ENCODE measurements at regions of chr1 and their contacts with region 1.

Region 1: DNA sequence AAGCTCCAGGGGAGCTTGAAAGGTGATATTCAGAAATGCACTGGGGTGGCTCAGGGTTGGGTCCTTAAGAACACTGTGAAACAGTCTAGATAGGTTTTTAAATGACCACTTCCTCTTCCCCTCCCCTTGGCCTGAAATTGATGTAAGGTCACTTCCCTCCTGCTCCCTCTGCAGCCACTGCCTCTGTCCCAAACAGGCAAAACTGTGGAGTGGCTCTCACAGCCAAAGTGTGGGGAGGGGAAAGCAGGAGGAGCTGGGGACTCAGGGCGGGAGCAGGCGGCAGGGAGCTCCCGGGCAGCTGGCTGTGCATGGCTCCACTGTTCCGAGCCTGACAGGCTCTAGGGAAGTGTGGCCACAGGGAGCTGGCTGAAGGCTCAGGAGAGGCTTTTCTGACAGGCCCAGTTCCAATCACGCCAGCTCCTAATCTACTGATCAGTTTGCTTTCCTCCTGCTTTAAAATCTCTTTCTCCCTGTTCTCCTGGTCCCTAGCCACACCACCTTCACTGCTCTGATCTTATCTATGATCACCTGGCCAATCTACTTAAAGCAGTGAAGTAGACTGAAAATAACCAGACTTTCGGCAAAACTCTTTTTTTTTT is 5.1 kb upstream of the CSRP1 start:
- DNase-seq: no peak
- H3K4me3 ChIP-seq: no peak overlapping the region
- H3K27ac ChIP-seq: no peak overlapping the region
- H3K4me1 ChIP-seq: peaks cover 36% of the 10 kb centered on the region
- H3K27me3 ChIP-seq: no peaks in the 10 kb centered on the region
- CTCF ChIP-seq: no peak

Region 2: GRCh38 chr1:201245092-201245491 is 266.9 kb before region 1 on chr1:
- CTCF ChIA-PET with region 1: no interaction called
- dilution Hi-C with region 1: no loop called
- in situ Hi-C with region 1: no loop called
- intact Hi-C with region 1: no loop called
- DNase-seq: no peak
- H3K4me3 ChIP-seq: no peak overlapping the region
- H3K27ac ChIP-seq: no peak overlapping the region
- H3K4me1 ChIP-seq: no peaks in the 10 kb centered on the region
- H3K27me3 ChIP-seq: peaks cover 4% of the 10 kb centered on the region
- CTCF ChIP-seq: no peak

Region 3: GRCh38 chr1:201385299-201385891 is 126.6 kb before region 1 on chr1:
- CTCF ChIA-PET with region 1: no interaction called
- dilution Hi-C with region 1: no loop called
- in situ Hi-C with region 1: no loop called
- intact Hi-C with region 1: loop called (anchors 2 kb)
- DNase-seq: peak; percentile 54
- H3K4me3 ChIP-seq: no peak overlapping the region
- H3K27ac ChIP-seq: no peak overlapping the region
- H3K4me1 ChIP-seq: no peaks in the 10 kb centered on the region
- H3K27me3 ChIP-seq: no peaks in the 10 kb centered on the region
- CTCF ChIP-seq: peak; percentile 90 to 95

Region 4: DNA sequence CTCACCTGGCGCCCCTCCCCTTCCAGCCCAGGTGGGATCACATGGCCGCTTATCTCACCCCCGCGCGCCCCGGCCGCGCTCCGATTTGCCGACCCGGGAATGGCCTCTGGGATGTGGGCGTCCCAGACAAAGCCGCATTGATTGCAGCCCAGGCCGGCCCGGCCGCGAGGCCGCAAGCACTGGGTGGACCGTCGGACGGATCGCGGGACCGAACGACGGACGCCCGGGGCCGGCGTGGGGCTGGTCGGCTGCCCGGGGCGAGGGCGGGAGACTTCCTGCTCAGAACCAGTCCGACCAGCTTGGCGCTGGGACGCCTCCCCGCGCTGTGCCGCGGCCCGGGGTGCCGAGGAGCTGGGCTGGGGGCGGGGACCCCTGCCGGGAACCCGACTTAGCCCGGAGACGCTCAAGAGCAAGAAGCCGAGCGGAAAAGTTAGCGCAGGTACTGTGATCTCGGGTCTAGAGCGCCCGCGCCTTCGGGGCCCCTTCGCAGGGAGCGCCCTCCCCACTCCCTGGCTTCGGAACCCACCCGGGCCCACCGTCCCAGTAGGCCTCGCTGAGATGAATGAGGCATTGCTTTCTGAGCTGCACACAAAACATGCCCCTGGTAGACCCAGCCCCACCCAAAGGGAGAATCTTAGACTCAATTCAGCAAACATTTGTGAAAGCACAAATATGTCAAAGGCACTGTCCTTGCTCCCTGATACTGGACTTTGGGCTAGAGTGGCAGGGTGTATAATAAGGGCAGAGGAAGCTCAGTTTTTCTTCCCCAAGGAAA is 112.5 kb before region 1 on chr1:
- CTCF ChIA-PET with region 1: no interaction called
- dilution Hi-C with region 1: no loop called
- in situ Hi-C with region 1: no loop called
- intact Hi-C with region 1: loop called (anchors 5 kb)
- DNase-seq: peak; percentile 85
- H3K4me3 ChIP-seq: peak overlapping the region; percentile 88 to 90 (median 90)
- H3K27ac ChIP-seq: peak overlapping the region; percentile 77
- H3K4me1 ChIP-seq: peaks cover 44% of the 10 kb centered on the region
- H3K27me3 ChIP-seq: no peaks in the 10 kb centered on the region
- CTCF ChIP-seq: no peak

Region 5: DNA sequence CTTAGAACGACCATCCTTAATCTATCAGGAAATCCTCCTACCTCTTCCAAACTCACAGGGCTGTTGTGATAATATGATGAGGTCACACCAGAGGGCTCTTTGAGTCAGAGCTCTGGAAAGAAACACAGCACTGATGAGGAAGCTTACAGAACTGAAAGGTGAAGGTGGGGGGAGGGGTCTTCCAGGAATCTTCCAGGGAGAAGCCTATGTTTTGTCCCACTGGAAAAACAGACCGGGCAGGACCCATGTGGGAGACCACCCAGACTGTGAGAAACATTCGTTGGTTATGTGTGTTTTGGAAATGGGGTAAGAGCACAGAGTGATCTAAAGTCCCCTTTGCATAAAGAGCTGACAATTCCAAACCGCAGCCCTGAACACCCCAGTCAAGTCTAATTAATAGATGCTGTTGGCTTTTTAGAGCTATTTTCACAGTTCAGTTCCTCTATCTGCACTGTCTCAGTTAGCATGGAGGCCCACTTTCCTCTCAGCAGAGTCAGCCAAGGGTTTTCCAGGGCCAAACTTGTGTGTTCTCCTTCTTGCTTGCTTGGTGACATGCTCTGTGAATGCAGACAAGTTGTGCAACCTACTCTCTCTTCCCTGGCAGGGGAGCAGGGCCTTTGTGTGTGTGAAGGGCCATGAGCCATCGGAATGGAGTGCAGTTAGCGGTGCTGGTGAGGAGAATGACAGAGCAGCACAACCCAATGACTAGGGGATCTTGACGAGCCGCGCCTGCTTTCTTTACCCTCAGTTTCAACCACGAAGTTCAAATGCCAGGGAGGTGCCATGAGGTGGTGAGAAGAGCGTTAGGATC is 55.3 kb before region 1 on chr1:
- CTCF ChIA-PET with region 1: no interaction called
- dilution Hi-C with region 1: no loop called
- in situ Hi-C with region 1: no loop called
- intact Hi-C with region 1: no loop called
- DNase-seq: peak; percentile 98
- H3K4me3 ChIP-seq: no peak overlapping the region
- H3K27ac ChIP-seq: peak overlapping the region; percentile 97
- H3K4me1 ChIP-seq: peaks cover 70% of the 10 kb centered on the region
- H3K27me3 ChIP-seq: no peaks in the 10 kb centered on the region
- CTCF ChIP-seq: no peak

Region 6: DNA sequence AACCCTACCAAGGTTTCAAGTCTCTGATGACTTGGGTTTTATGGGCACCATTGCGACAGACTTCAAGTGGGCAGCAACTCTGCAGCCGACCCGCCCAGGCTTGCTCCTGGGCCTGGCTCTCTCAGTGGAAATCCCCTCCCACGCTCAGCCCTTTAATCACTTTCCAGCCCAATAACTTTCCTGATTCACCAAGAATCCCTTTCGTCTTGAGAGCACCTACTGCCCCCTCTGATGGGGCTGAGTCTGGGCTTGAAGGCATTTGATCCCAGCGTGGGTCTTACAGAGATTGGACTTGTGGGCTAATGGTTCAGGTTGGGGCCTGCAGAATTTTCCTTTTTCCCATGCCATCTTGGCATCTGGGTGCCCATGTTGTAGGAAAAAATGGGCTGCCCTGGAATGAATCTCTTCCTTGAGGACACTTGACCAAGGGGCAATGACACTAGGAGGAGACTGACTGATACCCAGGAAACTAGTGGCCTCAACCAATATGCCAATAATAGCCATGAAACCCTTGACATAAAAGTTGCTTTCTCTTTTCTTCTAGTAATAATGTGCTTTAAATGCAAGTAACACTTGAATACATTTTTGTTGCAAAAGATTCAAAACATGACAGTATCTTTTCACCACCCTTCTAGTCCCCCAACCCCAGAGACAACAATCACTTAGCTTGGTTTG is 35.2 kb before region 1 on chr1:
- CTCF ChIA-PET with region 1: interaction called, 15 read pairs
- dilution Hi-C with region 1: loop called (anchors 5 kb)
- in situ Hi-C with region 1: no loop called
- intact Hi-C with region 1: loop called (anchors 1 kb)
- DNase-seq: peak; percentile 99
- H3K4me3 ChIP-seq: no peak overlapping the region
- H3K27ac ChIP-seq: peak overlapping the region; percentile 97
- H3K4me1 ChIP-seq: peaks cover 58% of the 10 kb centered on the region
- H3K27me3 ChIP-seq: no peaks in the 10 kb centered on the region
- CTCF ChIP-seq: peak in 1 of 2 donors; percentile 39

Region 7: GRCh38 chr1:201481761-201482493 is 30.1 kb before region 1 on chr1:
- CTCF ChIA-PET with region 1: interaction called, 15 read pairs
- dilution Hi-C with region 1: loop called (anchors 5 kb)
- in situ Hi-C with region 1: no loop called
- intact Hi-C with region 1: loop called (anchors 1 kb)
- DNase-seq: peak; percentile 68
- H3K4me3 ChIP-seq: peak overlapping the region in 1 of 3 experiments; percentile 7
- H3K27ac ChIP-seq: no peak overlapping the region
- H3K4me1 ChIP-seq: peaks cover 30% of the 10 kb centered on the region
- H3K27me3 ChIP-seq: no peaks in the 10 kb centered on the region
- CTCF ChIP-seq: peak; percentile 71 to 90

Measured in mammary epithelial cell (primary cell).